ENCODE measurements at regions of chr11 and their contacts with region 1.

Region 1: GRCh38 chr11:11178671-11179638 is 174.1 kb downstream of the CSNK2A3 start:
- DNase-seq: peak; percentile 86
- H3K4me3 ChIP-seq: no peak overlapping the region
- H3K27ac ChIP-seq: peak overlapping the region; percentile 63
- H3K4me1 ChIP-seq: peaks cover 13% of the 10 kb centered on the region
- H3K27me3 ChIP-seq: no peaks in the 10 kb centered on the region
- CTCF ChIP-seq: no peak

Region 2: DNA sequence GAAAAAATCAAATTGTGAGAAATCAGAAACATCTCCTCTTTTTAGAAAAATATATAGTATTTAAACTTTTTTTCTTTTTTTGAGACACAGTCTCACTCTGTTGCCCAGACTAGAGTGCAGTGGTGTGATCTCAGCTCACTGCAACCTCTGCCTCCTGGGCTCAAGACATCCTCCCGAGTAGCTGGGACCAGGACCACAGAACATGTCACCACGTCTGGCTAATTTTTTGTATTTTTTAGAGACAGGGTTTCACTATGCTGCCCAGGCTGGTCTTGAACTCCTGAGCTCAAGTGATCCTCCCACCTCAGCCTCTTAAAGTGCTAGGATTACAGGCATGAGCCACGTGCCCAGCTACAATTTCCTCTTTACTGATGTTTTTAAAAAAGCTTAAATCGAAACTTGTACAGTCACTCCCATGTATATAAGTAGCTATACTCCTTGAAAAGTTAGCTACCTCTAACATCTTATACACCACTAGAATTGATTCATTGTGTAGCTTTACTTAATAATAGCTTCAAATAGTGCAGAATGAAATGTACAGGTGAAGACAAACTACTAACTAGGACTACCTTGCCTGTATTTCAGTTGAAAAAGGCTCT is 380.5 kb before region 1 on chr11:
- CTCF ChIA-PET with region 1: interaction called, 11 read pairs
- dilution Hi-C with region 1: no loop called
- in situ Hi-C with region 1: no loop called
- intact Hi-C with region 1: no loop called
- DNase-seq: no peak
- H3K4me3 ChIP-seq: no peak overlapping the region
- H3K27ac ChIP-seq: no peak overlapping the region
- H3K4me1 ChIP-seq: no peaks in the 10 kb centered on the region
- H3K27me3 ChIP-seq: no peaks in the 10 kb centered on the region
- CTCF ChIP-seq: no peak

Region 3: GRCh38 chr11:11135820-11136465 is 43.0 kb before region 1 on chr11:
- CTCF ChIA-PET with region 1: no interaction called
- dilution Hi-C with region 1: no loop called
- in situ Hi-C with region 1: no loop called
- intact Hi-C with region 1: no loop called
- DNase-seq: peak; percentile 4
- H3K4me3 ChIP-seq: no peak overlapping the region
- H3K27ac ChIP-seq: no peak overlapping the region
- H3K4me1 ChIP-seq: no peaks in the 10 kb centered on the region
- H3K27me3 ChIP-seq: no peaks in the 10 kb centered on the region
- CTCF ChIP-seq: no peak

Region 4: GRCh38 chr11:11229647-11230046 is 50.7 kb after region 1 on chr11:
- CTCF ChIA-PET with region 1: interaction called, 3 read pairs
- dilution Hi-C with region 1: loop called (anchors 5 kb)
- in situ Hi-C with region 1: no loop called
- intact Hi-C with region 1: no loop called
- DNase-seq: peak; percentile 94
- H3K4me3 ChIP-seq: no peak overlapping the region
- H3K27ac ChIP-seq: peak overlapping the region; percentile 36
- H3K4me1 ChIP-seq: peaks cover 35% of the 10 kb centered on the region
- H3K27me3 ChIP-seq: no peaks in the 10 kb centered on the region
- CTCF ChIP-seq: no peak

Measured in mammary epithelial cell (primary cell).